ENCODE measurements at regions of chr3 and their contacts with region 1.

Region 1: DNA sequence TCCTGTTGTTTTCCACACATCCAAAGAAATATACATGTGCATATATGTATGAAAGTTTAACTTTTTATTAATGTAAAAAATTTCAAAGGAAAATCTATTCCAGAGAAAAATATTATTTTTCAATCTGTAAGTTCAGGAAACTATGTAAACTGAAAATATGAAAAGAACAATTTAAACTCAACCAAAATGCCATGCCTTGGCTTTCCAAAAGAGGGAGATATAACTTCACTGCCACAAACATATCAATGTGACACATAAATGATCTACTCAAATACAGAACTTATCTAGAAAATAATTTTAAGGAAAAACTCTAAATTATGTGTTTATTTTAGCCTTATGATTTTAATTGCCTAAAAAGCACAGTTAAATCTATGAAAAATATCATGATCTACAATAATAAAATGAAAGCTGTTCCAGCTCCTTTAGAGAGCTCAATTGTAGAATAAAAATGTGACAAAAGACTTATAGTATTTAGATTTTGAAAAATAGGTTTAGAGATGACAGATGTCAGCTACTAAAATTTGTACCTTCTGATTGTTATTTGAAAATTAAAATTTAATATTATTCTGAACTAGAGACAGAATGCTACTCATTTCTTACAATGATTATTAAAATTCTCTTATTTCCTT is 94.8 kb downstream of the GBE1 start:
- DNase-seq: no peak
- H3K4me3 ChIP-seq: no peak overlapping the region
- H3K27ac ChIP-seq: no peak overlapping the region
- H3K4me1 ChIP-seq: no peaks in the 10 kb centered on the region
- H3K27me3 ChIP-seq: no peaks in the 10 kb centered on the region
- CTCF ChIP-seq: peak; percentile 79

Region 2: DNA sequence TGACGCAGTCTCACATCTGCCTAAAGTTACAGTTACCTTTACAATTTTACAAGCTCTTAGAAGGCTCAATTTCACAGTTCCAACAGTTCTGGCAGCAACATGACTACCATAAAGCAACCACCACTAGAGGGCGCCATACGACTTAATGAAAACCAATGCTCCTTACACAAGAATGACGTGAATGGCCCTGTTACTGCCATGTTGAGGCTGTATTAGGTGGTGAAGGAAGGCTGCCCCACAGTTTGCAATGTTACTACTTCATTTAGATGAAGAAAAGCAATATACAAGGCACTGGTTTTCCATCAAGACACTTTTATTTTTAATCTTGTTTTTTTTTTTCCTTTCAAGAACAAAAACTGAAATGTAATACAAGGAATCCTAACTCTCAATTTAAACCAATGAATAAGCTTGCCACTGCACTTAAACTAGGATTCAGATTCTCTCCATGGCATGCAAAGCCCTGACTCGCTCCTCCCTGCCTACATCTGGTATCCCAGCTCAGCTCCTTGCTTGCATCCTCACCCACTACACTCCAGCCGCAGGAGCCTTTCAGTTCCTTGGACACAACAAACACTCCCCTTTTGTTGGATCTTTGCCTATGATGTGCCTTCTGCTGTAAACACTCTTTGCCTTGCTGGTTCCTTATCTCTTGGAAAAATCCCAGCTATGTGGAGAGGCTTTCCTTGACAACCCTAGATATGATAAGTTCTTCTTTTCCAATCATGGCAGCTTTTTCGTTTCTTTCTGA is 175.9 kb before region 1 on chr3:
- CTCF ChIA-PET with region 1: no interaction called
- POLR2A ChIA-PET with region 1: no interaction called
- intact Hi-C with region 1: loop called (anchors 10 kb)
- DNase-seq: peak; percentile 56 to 64
- H3K4me3 ChIP-seq: no peak overlapping the region
- H3K27ac ChIP-seq: no peak overlapping the region
- H3K4me1 ChIP-seq: no peaks in the 10 kb centered on the region
- H3K27me3 ChIP-seq: no peaks in the 10 kb centered on the region
- CTCF ChIP-seq: peak; percentile 87

Region 3: DNA sequence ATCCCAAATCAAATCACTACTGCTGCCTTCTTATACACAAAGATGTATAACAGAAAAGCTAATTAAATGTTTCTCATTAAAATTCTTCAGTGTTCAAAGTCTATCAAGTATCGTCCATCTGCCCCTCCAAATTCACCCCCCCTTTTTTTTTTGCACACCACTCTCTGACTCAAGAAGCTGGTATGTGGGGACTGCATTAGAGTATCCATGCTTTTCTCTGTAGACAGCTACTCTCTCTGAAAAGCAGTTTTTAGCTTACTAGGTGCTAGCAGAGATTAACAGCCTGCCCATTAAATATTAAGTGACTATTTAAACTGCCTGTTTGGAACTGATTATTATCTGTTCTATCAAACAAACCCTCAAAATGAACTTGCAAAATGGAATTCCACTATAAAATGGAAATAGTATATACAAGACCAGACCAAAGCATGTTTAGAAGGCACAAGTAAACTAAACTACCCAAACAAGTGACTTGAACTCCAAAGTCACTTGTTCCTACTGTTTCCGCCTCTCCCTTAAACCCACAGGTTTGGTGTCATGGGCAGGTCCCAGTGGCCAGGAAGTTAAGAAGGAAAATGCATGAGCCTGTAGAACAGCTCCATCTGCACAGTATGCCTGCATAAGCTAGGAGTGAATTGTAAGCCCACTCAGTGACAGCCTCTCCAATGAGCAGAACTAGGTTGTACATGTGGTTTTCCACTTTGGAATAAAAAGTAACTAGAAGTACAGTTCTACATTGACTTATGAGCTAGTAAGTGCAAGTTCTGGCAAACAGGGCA is 62.3 kb after region 1 on chr3:
- CTCF ChIA-PET with region 1: no interaction called
- POLR2A ChIA-PET with region 1: no interaction called
- intact Hi-C with region 1: no loop called
- DNase-seq: no peak
- H3K4me3 ChIP-seq: no peak overlapping the region
- H3K27ac ChIP-seq: no peak overlapping the region
- H3K4me1 ChIP-seq: peaks cover 3% of the 10 kb centered on the region
- H3K27me3 ChIP-seq: no peaks in the 10 kb centered on the region
- CTCF ChIP-seq: no peak

Region 4: GRCh38 chr3:81760924-81761903 is 94.6 kb after region 1 on chr3 and contains the start of gene GBE1:
- CTCF ChIA-PET with region 1: no interaction called
- POLR2A ChIA-PET with region 1: no interaction called
- intact Hi-C with region 1: loop called (anchors 2 kb)
- DNase-seq: peak; percentile 95
- H3K4me3 ChIP-seq: peak within 1 kb of the TSS; percentile 63
- H3K27ac ChIP-seq: peak within 1 kb of the TSS; percentile 89
- H3K4me1 ChIP-seq: peaks cover 24% of the 10 kb centered on the region
- H3K27me3 ChIP-seq: no peaks in the 10 kb centered on the region
- CTCF ChIP-seq: peak; percentile 56; the same call in 1 of the 2 replicates
- total RNA-seq, gene GBE1: 23.1 and 31.2 TPM in 2 replicates

Region 5: DNA sequence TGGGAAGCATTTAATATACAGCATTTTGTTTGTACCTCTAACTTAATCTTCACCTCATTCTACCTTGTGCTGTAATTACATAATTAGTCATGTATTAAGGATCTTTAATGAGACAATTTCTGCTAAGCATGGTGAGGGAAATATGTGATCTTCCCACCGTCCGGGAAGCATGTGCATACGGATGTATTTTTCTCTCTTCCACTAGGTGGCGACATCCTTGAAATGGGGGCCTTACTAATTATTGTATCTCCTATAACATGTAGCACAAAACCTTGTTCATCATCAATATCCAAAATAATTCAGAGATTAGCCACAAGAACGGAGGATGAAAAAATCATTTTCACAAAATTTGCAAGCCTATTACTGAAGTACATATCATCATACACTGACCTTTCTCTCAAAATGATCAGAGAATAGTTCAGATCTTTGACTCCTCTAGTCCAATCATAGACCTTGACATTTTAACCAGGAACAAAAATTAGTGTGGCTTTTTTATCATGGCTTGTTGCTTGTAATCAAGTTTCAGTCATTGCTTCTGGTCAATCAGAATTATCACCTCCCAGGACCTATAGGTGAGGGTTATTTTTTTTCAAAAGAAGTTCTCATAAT is 243.7 kb after region 1 on chr3:
- CTCF ChIA-PET with region 1: no interaction called
- POLR2A ChIA-PET with region 1: no interaction called
- intact Hi-C with region 1: loop called (anchors 5 kb)
- DNase-seq: no peak
- H3K4me3 ChIP-seq: no peak overlapping the region
- H3K27ac ChIP-seq: no peak overlapping the region
- H3K4me1 ChIP-seq: no peaks in the 10 kb centered on the region
- H3K27me3 ChIP-seq: no peaks in the 10 kb centered on the region
- CTCF ChIP-seq: peak; percentile 86

Region 6: GRCh38 chr3:82133070-82133606 is 466.5 kb after region 1 on chr3:
- CTCF ChIA-PET with region 1: no interaction called
- POLR2A ChIA-PET with region 1: no interaction called
- intact Hi-C with region 1: loop called (anchors 1 kb)
- DNase-seq: peak in 1 of 2 experiments; percentile 29
- H3K4me3 ChIP-seq: no peak overlapping the region
- H3K27ac ChIP-seq: no peak overlapping the region
- H3K4me1 ChIP-seq: no peaks in the 10 kb centered on the region
- H3K27me3 ChIP-seq: no peaks in the 10 kb centered on the region
- CTCF ChIP-seq: peak; percentile 82

Region 7: GRCh38 chr3:83514130-83514914 is 1847.7 kb after region 1 on chr3:
- CTCF ChIA-PET with region 1: no interaction called
- POLR2A ChIA-PET with region 1: no interaction called
- intact Hi-C with region 1: loop called (anchors 10 kb)
- DNase-seq: peak; percentile 15 to 36
- H3K4me3 ChIP-seq: no peak overlapping the region
- H3K27ac ChIP-seq: no peak overlapping the region
- H3K4me1 ChIP-seq: peaks cover 7% of the 10 kb centered on the region; the same call in 1 of the 2 replicates
- H3K27me3 ChIP-seq: no peaks in the 10 kb centered on the region
- CTCF ChIP-seq: no peak